ENCODE measurements at regions of chr10 and their contacts with region 1.

Region 1: GRCh38 chr10:5548527-5549223 is 23.9 kb downstream of the CALML3 start:
- DNase-seq: peak; percentile 98
- H3K4me3 ChIP-seq: no peak overlapping the region
- H3K27ac ChIP-seq: peak overlapping the region; percentile 100
- H3K4me1 ChIP-seq: peaks cover 89% of the 10 kb centered on the region
- H3K27me3 ChIP-seq: no peaks in the 10 kb centered on the region
- CTCF ChIP-seq: no peak

Region 2: DNA sequence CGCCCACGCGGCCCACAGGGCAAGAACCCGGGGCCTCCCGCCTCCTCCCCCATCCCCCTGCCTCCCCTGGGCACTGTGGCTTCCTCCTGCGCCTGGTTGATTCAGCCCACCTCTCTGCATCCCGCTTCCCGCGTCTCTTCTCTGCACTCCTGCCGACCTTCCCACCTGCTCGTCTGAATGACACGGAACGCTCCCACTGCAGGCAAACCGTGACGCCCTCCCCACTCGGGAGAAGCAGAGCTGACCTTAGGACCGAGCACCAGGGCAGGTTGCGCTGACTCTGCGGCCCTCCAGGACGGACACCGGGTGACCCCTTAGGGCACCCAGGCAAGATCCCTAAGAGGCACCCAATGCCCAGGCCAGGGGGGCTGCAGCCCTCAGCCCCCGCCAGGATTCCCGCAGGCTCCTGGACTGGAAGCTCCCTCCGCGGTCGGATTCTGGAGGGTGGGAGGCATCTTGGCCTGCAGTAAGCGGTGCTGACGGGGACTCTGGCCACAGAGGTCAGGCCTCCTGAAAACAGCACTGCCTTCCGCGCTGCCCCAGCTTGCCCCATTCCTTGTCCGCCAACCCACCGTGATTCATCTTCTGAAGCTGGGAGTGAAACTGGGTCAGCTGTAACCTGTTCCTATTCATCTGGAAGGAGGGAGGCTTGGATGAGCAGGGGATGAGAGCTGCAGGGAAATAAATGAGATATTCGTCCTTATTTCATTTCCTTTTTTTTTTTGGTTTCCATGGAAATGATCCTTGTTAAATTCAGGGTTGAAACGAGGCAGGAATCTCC is 22.9 kb before region 1 on chr10:
- CTCF ChIA-PET with region 1: no interaction called
- dilution Hi-C with region 1: no loop called
- in situ Hi-C with region 1: no loop called
- intact Hi-C with region 1: loop called (anchors 1 kb)
- DNase-seq: peak; percentile 90
- H3K4me3 ChIP-seq: peak overlapping the region; percentile 6 to 46 (median 43)
- H3K27ac ChIP-seq: peak overlapping the region; percentile 69
- H3K4me1 ChIP-seq: peaks cover 29% of the 10 kb centered on the region
- H3K27me3 ChIP-seq: no peaks in the 10 kb centered on the region
- CTCF ChIP-seq: no peak

Region 3: DNA sequence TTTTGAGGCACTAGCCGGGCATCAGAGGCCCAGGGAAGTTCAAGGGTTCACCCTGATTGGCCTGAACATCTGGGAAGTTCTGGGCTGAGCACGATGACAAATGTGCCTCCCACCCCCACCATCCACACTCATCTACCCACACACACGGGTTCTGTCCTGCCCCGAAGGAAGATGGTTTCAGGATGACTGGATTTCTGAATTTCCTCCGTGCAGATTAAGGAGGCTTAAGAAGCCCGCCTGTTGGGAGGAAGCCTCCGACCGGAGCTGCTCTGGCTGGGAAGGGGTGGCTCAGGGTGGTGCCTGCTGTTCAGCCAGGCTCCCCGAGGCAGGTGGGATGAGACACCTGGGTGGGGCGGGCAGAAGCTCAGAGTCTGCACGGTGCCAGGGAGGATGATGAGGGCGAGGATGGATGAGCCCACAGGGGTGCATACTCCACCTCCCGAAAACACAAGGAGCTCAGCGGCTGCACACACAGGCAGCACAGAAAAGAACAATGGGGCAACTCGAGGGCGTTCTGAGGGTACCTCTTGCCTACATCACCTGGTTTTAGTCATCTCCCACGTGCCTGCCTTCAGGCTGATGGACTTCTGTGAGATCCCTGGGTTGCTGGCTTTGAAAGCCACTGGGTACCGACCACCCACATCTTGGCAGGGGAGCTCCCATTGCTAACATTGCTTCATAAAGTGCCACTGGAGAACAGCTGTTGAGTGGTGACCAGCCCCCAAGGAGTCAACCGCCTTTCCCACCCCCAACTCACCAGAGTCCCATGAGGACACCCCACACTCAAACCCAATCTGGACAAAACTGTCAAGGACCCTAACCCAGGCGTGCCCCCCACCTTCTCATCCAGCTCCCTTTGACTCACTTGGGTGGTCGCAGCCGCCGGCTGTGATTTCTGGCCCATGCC is 17.2 kb after region 1 on chr10:
- CTCF ChIA-PET with region 1: no interaction called
- dilution Hi-C with region 1: no loop called
- in situ Hi-C with region 1: no loop called
- intact Hi-C with region 1: loop called (anchors 1 kb)
- DNase-seq: peak; percentile 100
- H3K4me3 ChIP-seq: no peak overlapping the region
- H3K27ac ChIP-seq: peak overlapping the region; percentile 100
- H3K4me1 ChIP-seq: peaks cover 44% of the 10 kb centered on the region
- H3K27me3 ChIP-seq: no peaks in the 10 kb centered on the region
- CTCF ChIP-seq: no peak

Region 4: DNA sequence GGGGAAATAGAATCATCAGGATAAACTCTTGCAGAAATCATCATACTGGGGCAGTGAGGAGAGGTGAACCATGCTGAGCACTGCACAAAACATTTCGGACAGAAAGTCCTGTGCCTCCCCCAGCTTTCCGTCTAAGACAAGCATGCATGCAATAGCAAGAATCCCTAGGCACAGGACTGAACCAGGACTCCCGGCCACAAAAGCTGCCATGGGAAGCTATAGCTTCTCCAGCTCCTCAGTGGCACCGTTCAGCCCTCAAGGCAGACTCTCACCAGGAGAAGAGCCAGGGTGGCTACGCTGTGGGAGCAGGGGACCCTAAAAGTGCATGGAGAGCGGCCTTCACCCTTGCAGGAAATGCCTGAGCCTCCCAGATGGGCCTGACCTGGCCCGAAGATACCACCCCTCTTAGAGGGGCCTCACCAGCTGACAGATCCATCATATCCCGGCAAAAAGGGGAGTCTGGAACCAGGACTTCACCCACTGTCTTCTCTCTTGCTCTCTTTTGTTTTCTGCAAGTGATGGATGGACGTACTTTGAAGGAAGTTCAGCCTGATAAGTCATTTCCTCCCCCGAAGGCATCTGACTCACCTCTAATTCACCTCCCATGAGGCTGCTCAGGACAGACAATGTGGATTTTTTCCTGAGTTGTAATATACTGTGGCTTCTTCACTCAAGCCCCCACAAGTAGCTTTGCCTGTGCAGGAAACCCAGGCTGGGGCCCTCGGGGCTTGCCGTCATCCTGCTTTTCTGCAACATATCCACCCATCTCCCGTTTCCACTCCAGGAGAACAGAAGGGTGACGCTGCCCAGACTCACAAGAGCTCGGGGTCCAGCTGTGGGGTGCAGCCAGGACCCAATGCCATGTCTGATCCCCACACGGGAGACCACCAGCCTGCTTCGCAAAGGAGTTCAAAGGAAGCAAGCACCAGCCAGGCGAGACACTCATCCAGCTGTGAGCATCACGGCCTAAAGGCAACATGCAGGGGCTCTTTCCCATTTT is 47.2 kb after region 1 on chr10:
- CTCF ChIA-PET with region 1: no interaction called
- dilution Hi-C with region 1: no loop called
- in situ Hi-C with region 1: no loop called
- intact Hi-C with region 1: loop called (anchors 1 kb)
- DNase-seq: peak; percentile 99
- H3K4me3 ChIP-seq: peak overlapping the region; percentile 12 to 36 (median 30)
- H3K27ac ChIP-seq: peak overlapping the region; percentile 90
- H3K4me1 ChIP-seq: peaks cover 31% of the 10 kb centered on the region
- H3K27me3 ChIP-seq: no peaks in the 10 kb centered on the region
- CTCF ChIP-seq: no peak

Region 5: DNA sequence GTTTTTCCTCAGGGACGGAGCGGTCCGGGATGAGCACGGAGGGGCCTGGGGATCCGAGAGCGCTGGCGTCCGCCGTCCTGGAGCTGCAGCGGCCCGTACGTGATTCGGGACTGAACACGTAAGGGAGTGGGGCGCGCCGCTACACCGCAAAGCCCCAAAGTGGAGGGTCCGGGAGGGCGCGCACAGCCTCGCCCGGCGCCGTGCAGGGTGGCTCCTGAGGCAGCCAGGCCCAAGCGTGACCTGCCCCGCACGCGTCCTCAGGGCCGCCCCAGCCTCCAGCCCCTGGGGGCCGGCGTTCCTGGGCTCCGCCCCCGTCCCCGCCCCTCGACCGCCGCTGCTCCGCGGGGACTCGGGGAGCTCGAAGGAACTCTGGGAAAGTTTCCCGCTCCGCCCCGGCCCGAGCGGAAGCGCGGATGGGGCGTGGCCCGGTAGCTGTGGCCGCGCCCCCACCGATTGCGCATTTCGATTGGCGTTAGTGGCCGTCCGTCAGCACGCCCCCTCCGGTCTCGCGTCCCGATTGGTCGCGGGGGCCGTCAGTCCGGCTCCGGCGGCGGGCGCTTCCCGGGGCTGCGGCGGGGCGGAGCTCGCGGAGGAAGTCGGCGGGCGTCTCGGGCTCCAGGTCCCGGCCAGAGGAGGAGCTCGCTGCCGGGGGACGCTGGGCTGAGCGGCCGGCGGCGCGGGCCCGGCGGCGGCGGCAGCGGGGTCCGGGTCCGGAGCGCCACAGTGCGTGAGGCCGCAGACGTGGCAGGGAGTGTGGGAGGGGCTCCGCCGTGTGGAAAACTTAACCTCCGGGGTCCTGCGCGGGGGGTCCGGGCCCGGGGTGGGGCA is 341.2 kb after region 1 on chr10 and contains the starts of genes ANKRD16 and FBH1:
- CTCF ChIA-PET with region 1: no interaction called
- dilution Hi-C with region 1: no loop called
- in situ Hi-C with region 1: no loop called
- intact Hi-C with region 1: no loop called
- DNase-seq: peak; percentile 99
- H3K4me3 ChIP-seq: peak within 1 kb of the TSS; percentile 84 to 98 (median 85)
- H3K27ac ChIP-seq: peak within 1 kb of the TSS; percentile 19
- H3K4me1 ChIP-seq: peaks cover 24% of the 10 kb centered on the region
- H3K27me3 ChIP-seq: no peaks in the 10 kb centered on the region
- CTCF ChIP-seq: no peak
- total RNA-seq, gene ANKRD16: 8.2 to 8.4 TPM
- total RNA-seq, gene FBH1: 62.7 to 77.3 TPM